CD14-positive monocyte (primary cell): ENCODE measurements at regions of chr5 and their contacts with region 1.

Region 1: DNA sequence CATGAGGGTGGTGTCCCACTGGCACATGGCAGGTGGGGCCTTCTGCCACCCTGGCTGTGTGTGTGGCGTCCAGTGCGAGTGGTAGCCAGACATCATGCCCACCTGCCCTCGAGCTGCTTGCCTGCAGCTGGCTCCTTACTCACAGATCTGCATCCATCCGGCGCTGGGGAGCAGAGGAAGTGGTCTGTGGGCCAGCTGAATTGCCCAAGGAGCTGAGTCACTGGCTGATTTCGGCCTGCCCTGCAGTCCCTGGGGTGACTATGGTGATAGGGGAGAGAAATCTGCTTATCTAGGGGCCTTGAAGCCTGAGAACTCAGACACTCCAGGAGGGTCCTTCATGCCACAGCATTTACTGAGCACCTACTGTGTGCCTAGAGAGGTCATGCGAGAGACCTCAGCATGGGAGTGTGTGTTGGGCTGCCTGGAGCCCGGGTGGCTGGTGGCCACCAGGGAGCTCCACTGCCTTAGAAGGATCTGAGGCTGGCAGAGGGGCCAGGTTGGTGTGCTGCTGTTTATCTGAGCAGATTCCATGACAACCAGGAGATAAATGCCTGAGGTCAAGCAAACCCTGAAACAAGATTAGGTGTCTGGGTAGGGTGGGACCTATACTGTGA is 57.1 kb downstream of the SLC22A5 start:
- DNase-seq: peak; percentile 96 to 98 (median 97)
- H3K4me3 ChIP-seq: peak overlapping the region in 2 of 3 experiments; percentile 37 to 62
- H3K4me3 Mint-ChIP-seq: peak overlapping the region; percentile 63 to 79
- H3K27ac ChIP-seq: peak overlapping the region; percentile 97 to 99
- H3K27ac Mint-ChIP-seq: peak overlapping the region; percentile 95 to 98 (median 98)
- H3K4me1 ChIP-seq: peaks cover 100% of the 10 kb centered on the region in 2 donors
- H3K4me1 Mint-ChIP-seq: peaks cover 99% of the 10 kb centered on the region
- H3K27me3 ChIP-seq: no peaks in the 10 kb centered on the region
- H3K27me3 Mint-ChIP-seq: peaks cover 0 to 2% (median 2%) of the 10 kb centered on the region in 3 donors
- CTCF ChIP-seq: peak; percentile 44

Region 2: GRCh38 chr5:132238169-132238744 is 188.4 kb before region 1 on chr5:
- intact Hi-C with region 1: no loop called
- DNase-seq: peak; percentile 37 to 54 (median 44)
- H3K4me3 ChIP-seq: no peak overlapping the region
- H3K4me3 Mint-ChIP-seq: no peak overlapping the region
- H3K27ac ChIP-seq: no peak overlapping the region
- H3K27ac Mint-ChIP-seq: no peak overlapping the region
- H3K4me1 ChIP-seq: no peaks in the 10 kb centered on the region
- H3K4me1 Mint-ChIP-seq: no peaks in the 10 kb centered on the region
- H3K27me3 ChIP-seq: no peaks in the 10 kb centered on the region
- H3K27me3 Mint-ChIP-seq: peaks cover 0 to 3% (median 3%) of the 10 kb centered on the region in 3 donors
- CTCF ChIP-seq: peak; percentile 88

Region 3: DNA sequence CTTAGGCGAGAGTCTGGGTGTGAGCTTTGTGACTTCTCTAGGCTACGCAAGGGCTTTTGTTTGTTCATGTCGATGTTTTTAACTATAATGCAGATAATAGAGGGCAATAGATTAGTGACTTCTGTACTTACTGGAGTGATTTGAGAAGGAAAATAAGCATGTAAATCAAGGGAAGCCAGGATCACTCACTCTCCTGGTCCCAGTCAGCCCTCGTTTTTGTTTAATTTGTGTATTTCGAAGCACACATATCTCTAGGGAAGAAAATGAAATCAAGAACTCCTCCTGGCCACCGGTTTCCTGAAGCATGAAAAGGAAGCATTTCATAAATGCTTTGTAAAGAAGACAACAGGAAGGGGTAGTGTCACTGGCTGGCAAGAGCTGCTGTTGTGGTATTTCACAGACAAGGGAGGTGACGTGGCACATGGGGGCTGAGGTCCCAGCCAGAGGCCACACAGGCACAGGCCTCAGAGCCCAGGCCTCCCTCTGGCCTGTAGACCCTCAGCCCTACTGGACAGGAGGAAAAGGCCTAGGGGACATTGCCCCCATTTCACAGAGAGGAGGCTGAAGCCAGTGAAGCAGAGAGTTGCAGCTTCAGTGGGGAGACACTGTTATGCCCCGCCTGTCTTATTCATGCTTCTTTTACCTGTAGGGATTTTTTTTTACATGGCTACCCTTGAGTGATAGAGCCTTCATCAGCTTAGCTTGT is 29.8 kb after region 1 on chr5:
- intact Hi-C with region 1: loop called (anchors 2 to 5 kb)
- DNase-seq: peak; percentile 86 to 95 (median 91)
- H3K4me3 ChIP-seq: peak overlapping the region; percentile 1 to 55 (median 16)
- H3K4me3 Mint-ChIP-seq: peak overlapping the region; percentile 62 to 74
- H3K27ac ChIP-seq: peak overlapping the region; percentile 99
- H3K27ac Mint-ChIP-seq: peak overlapping the region; percentile 99 to 100 (median 100)
- H3K4me1 ChIP-seq: peaks cover 88 to 93% of the 10 kb centered on the region in 2 donors
- H3K4me1 Mint-ChIP-seq: peaks cover 93% of the 10 kb centered on the region
- H3K27me3 ChIP-seq: no peaks in the 10 kb centered on the region
- H3K27me3 Mint-ChIP-seq: peaks cover 0 to 10% (median 0%) of the 10 kb centered on the region in 3 donors
- CTCF ChIP-seq: no peak

Region 4: DNA sequence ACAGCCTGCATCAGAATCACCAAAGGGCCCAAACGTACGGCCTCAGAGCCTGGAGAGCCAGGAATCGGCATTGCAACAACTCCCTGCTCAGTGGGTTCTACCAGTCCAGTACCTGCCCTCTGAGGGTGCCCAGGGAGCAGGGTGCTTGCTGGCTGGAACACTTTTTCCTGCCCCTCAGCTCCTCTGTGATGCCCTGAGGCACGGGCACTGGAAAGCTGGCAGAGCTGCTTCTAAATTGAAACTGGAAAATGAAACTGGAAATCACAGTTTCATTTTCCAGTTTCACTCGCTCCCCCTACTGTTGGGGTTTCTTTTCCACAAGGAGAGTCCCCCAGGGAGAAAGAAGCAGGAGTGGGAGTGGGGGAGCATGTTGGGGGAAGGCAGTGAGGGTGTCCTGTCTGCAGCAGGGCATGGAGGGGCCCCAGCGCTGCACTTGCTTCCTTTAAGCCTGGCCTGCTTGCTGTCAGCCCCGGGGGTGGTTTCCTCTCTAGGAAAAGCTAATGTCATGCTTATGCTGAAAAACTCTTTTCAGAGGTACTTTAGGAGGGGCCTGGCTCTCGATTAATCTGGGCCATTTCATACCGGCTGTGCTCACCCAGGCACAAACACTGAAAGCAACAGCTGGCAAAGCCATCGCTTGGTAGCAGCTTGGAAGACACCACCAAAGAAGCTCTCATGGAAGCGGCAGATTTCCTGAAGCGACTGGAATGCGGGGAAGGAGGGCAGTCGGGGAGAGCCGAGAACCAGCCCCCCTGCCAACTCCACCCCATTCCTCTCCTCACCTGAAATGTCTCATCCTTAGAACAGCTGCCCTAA is 37.7 kb after region 1 on chr5:
- intact Hi-C with region 1: loop called in 1 of 2 experiments (anchors 5 kb)
- DNase-seq: no peak
- H3K4me3 ChIP-seq: peak overlapping the region in 1 of 3 experiments; percentile 67
- H3K4me3 Mint-ChIP-seq: peak overlapping the region; percentile 58 to 85
- H3K27ac ChIP-seq: peak overlapping the region; percentile 53 to 84
- H3K27ac Mint-ChIP-seq: peak overlapping the region; percentile 91 to 98 (median 96)
- H3K4me1 ChIP-seq: peaks cover 99 to 100% of the 10 kb centered on the region in 2 donors
- H3K4me1 Mint-ChIP-seq: peaks cover 100% of the 10 kb centered on the region
- H3K27me3 ChIP-seq: no peaks in the 10 kb centered on the region
- H3K27me3 Mint-ChIP-seq: peaks cover 0 to 8% (median 4%) of the 10 kb centered on the region in 3 donors
- CTCF ChIP-seq: no peak

Region 5: DNA sequence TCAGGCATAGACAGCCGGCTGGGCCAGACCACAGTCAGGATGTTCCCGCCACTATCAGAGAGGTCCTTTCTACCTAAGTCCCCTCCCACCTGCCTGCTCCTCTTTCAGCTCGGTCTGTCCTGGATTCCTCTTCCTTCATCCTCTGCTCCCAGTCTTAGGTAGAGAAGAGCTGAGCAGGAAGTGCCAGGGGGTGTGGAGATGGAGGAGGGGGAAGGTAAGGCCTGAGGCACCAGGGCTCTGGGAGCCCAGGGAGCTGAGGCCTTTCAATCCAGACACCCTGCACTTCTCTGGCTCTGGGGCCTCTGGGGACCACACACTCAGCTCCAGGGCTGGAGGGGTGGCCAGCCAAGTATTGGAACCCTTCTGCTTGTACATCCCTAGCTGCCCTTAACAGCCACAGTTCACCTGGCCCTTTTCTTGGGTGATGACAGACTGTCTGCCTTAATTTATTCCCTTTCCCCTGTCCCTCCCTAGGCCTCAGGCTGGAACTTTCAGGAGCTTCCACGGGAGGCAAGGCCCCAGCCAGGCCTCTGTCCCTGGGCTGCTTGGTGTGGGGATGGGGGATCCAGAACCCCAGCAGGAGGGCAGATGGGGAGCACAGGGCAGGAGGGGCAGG is 48.4 kb after region 1 on chr5:
- intact Hi-C with region 1: no loop called
- DNase-seq: no peak
- H3K4me3 ChIP-seq: no peak overlapping the region
- H3K4me3 Mint-ChIP-seq: no peak overlapping the region
- H3K27ac ChIP-seq: no peak overlapping the region
- H3K27ac Mint-ChIP-seq: peak overlapping the region in 4 of 7 donors; percentile 15 to 77 (median 49)
- H3K4me1 ChIP-seq: peaks cover 35 to 63% of the 10 kb centered on the region in 2 donors
- H3K4me1 Mint-ChIP-seq: peaks cover 63% of the 10 kb centered on the region
- H3K27me3 ChIP-seq: no peaks in the 10 kb centered on the region
- H3K27me3 Mint-ChIP-seq: peaks cover 0 to 3% (median 0%) of the 10 kb centered on the region in 3 donors
- CTCF ChIP-seq: no peak